B cell (primary cell): ENCODE measurements at regions of chr6 and their contacts with region 1.

Region 1: GRCh38 chr6:142146828-142147662 is at the starts of genes NMBR and VTA1:
- DNase-seq: peak; percentile 99
- ATAC-seq: peak; percentile 98
- H3K4me3 ChIP-seq: peak within 1 kb of the TSS; percentile 84 to 97 (median 94)
- H3K4me3 Mint-ChIP-seq: peak within 1 kb of the TSS; percentile 88
- H3K27ac ChIP-seq: peak within 1 kb of the TSS; percentile 60 to 69
- H3K27ac Mint-ChIP-seq: peak within 1 kb of the TSS; percentile 81
- H3K4me1 ChIP-seq: peaks cover 21 to 24% of the 10 kb centered on the region in 2 donors
- H3K4me1 Mint-ChIP-seq: peaks cover 55% of the 10 kb centered on the region
- H3K27me3 ChIP-seq: peaks cover 0 to 3% (median 0%) of the 10 kb centered on the region in 4 experiments
- H3K27me3 Mint-ChIP-seq: peaks cover 3% of the 10 kb centered on the region
- CTCF ChIP-seq: peak; percentile 96
- total RNA-seq, gene NMBR: not detected in 2 replicates
- total RNA-seq, gene VTA1: 26.2 and 27.9 TPM in 2 replicates

Region 2: DNA sequence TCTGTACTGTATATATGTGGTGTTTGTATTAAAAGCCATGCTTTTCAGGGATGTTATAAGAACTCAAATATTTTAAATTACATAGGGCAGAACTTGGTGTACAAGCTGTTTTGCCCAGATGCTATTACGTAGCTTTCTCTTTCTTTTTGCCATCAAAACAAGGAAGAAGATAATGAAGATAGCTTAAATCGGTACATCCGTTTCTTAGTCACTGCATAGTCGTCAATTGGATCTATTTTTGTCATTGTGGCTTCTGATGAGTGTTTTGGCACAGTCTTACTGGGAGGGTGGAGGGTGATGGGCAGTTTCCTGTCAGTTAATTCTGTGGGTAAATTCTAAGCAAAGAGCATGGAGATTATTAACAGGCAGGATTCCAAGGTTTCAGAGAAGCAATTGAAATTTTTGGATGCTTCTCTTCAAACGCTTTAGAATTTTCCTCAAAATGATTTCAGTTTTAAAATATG is 663.4 kb before region 1 on chr6:
- CTCF ChIA-PET with region 1: no interaction called
- POLR2A ChIA-PET with region 1: no interaction called
- intact Hi-C with region 1: loop called (anchors 1 kb)
- DNase-seq: peak; percentile 87
- ATAC-seq: peak; percentile 84
- H3K4me3 ChIP-seq: peak overlapping the region; percentile 27 to 74 (median 40)
- H3K4me3 Mint-ChIP-seq: peak overlapping the region; percentile 67
- H3K27ac ChIP-seq: peak overlapping the region; percentile 91 to 94
- H3K27ac Mint-ChIP-seq: peak overlapping the region; percentile 82
- H3K4me1 ChIP-seq: peaks cover 27 to 38% of the 10 kb centered on the region in 2 donors
- H3K4me1 Mint-ChIP-seq: peaks cover 46% of the 10 kb centered on the region
- H3K27me3 ChIP-seq: no peaks in the 10 kb centered on the region
- H3K27me3 Mint-ChIP-seq: no peaks in the 10 kb centered on the region
- CTCF ChIP-seq: no peak

Region 3: GRCh38 chr6:142207265-142207877 is 60.3 kb after region 1 on chr6:
- CTCF ChIA-PET with region 1: interaction called, 10 read pairs
- POLR2A ChIA-PET with region 1: no interaction called
- intact Hi-C with region 1: loop called (anchors 5 kb)
- DNase-seq: peak; percentile 35
- ATAC-seq: no peak
- H3K4me3 ChIP-seq: no peak overlapping the region
- H3K4me3 Mint-ChIP-seq: no peak overlapping the region
- H3K27ac ChIP-seq: no peak overlapping the region
- H3K27ac Mint-ChIP-seq: no peak overlapping the region
- H3K4me1 ChIP-seq: no peaks in the 10 kb centered on the region
- H3K4me1 Mint-ChIP-seq: no peaks in the 10 kb centered on the region
- H3K27me3 ChIP-seq: no peaks in the 10 kb centered on the region
- H3K27me3 Mint-ChIP-seq: no peaks in the 10 kb centered on the region
- CTCF ChIP-seq: peak; percentile 71

Region 4: GRCh38 chr6:142387997-142388815 is 241.2 kb after region 1 on chr6:
- CTCF ChIA-PET with region 1: interaction called, 9 read pairs
- POLR2A ChIA-PET with region 1: no interaction called
- intact Hi-C with region 1: loop called (anchors 2 kb)
- DNase-seq: peak; percentile 5
- ATAC-seq: no peak
- H3K4me3 ChIP-seq: no peak overlapping the region
- H3K4me3 Mint-ChIP-seq: no peak overlapping the region
- H3K27ac ChIP-seq: no peak overlapping the region
- H3K27ac Mint-ChIP-seq: no peak overlapping the region
- H3K4me1 ChIP-seq: no peaks in the 10 kb centered on the region
- H3K4me1 Mint-ChIP-seq: no peaks in the 10 kb centered on the region
- H3K27me3 ChIP-seq: no peaks in the 10 kb centered on the region
- H3K27me3 Mint-ChIP-seq: no peaks in the 10 kb centered on the region
- CTCF ChIP-seq: peak; percentile 20

Region 5: DNA sequence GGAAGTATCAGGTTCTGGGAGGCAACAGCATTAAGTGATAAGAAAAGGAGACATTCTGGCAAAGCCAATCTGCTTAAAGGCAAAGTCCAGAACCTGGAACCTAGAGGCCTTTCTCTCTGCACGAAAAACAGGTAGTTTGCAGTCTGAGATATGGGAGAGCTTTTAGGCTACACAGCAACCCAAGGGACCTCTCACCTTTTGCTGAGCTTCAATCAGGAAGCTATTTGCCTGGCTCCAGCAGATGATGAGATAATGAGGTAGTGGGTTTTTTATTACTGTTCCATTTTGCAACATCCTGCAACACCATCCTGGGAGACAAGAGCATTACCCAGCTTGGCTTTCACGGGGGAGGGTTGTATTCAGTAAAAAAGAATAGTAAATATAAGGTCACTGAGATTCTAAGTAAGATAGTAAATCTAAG is 297.8 kb after region 1 on chr6:
- CTCF ChIA-PET with region 1: no interaction called
- POLR2A ChIA-PET with region 1: no interaction called
- intact Hi-C with region 1: no loop called
- DNase-seq: no peak
- ATAC-seq: no peak
- H3K4me3 ChIP-seq: no peak overlapping the region
- H3K4me3 Mint-ChIP-seq: no peak overlapping the region
- H3K27ac ChIP-seq: no peak overlapping the region
- H3K27ac Mint-ChIP-seq: no peak overlapping the region
- H3K4me1 ChIP-seq: no peaks in the 10 kb centered on the region
- H3K4me1 Mint-ChIP-seq: no peaks in the 10 kb centered on the region
- H3K27me3 ChIP-seq: no peaks in the 10 kb centered on the region
- H3K27me3 Mint-ChIP-seq: peaks cover 9% of the 10 kb centered on the region
- CTCF ChIP-seq: no peak

Region 6: GRCh38 chr6:142566628-142567396 is 419.8 kb after region 1 on chr6:
- CTCF ChIA-PET with region 1: no interaction called
- POLR2A ChIA-PET with region 1: no interaction called
- intact Hi-C with region 1: loop called (anchors 10 kb)
- DNase-seq: peak; percentile 51
- ATAC-seq: peak; percentile 49
- H3K4me3 ChIP-seq: no peak overlapping the region
- H3K4me3 Mint-ChIP-seq: no peak overlapping the region
- H3K27ac ChIP-seq: no peak overlapping the region
- H3K27ac Mint-ChIP-seq: no peak overlapping the region
- H3K4me1 ChIP-seq: no peaks in the 10 kb centered on the region
- H3K4me1 Mint-ChIP-seq: no peaks in the 10 kb centered on the region
- H3K27me3 ChIP-seq: no peaks in the 10 kb centered on the region
- H3K27me3 Mint-ChIP-seq: peaks cover 9% of the 10 kb centered on the region
- CTCF ChIP-seq: peak; percentile 84

Region 7: GRCh38 chr6:143060354-143060805 is 913.3 kb after region 1 on chr6:
- CTCF ChIA-PET with region 1: no interaction called
- POLR2A ChIA-PET with region 1: no interaction called
- intact Hi-C with region 1: loop called (anchors 2 kb)
- DNase-seq: peak; percentile 90
- ATAC-seq: peak; percentile 66
- H3K4me3 ChIP-seq: peak overlapping the region; percentile 71 to 88 (median 81)
- H3K4me3 Mint-ChIP-seq: peak overlapping the region; percentile 97
- H3K27ac ChIP-seq: peak overlapping the region; percentile 69 to 80
- H3K27ac Mint-ChIP-seq: peak overlapping the region; percentile 92
- H3K4me1 ChIP-seq: peaks cover 13 to 16% of the 10 kb centered on the region in 2 donors
- H3K4me1 Mint-ChIP-seq: peaks cover 24% of the 10 kb centered on the region
- H3K27me3 ChIP-seq: no peaks in the 10 kb centered on the region
- H3K27me3 Mint-ChIP-seq: peaks cover 3% of the 10 kb centered on the region
- CTCF ChIP-seq: peak; percentile 40